ENCODE measurements at regions of chr11 and their contacts with region 1.

Region 1: DNA sequence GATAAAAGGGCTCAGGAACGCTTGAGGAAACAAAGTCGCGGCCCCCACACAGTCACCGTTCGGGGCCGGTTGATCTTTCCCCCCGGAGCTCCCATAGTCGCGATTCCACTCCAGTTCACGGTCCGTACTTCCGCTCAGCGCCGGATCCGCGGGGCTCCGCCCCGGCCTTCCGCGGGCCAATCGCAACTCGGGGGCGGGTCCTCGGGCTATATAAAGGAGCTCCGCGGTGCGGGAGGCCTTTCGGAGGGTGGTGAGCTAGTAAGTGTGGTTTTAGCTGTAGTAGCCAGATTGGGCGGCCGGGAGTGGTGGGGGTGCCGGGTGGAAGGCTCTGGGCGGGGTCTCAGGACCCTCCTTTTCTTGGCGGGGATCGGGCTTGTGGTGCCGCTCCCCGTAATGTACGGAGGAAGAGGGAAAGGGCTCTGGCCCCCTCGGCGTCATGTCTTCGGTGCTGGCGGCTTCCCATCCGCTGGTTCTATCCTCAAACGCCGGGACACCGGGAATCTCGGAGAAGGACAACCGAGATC is at the starts of genes C11orf98 and CSKMT:
- DNase-seq: peak; percentile 59
- ATAC-seq: peak; percentile 90
- H3K4me3 ChIP-seq: peak within 1 kb of the TSS; percentile 94 to 96
- H3K27ac ChIP-seq: peak within 1 kb of the TSS; percentile 99
- H3K4me1 ChIP-seq: peaks cover 22% of the 10 kb centered on the region
- H3K27me3 ChIP-seq: no peaks in the 10 kb centered on the region
- CTCF ChIP-seq: no peak
- total RNA-seq, gene C11orf98: 96.7 TPM
- total RNA-seq, gene CSKMT: 36.9 TPM

Region 2: DNA sequence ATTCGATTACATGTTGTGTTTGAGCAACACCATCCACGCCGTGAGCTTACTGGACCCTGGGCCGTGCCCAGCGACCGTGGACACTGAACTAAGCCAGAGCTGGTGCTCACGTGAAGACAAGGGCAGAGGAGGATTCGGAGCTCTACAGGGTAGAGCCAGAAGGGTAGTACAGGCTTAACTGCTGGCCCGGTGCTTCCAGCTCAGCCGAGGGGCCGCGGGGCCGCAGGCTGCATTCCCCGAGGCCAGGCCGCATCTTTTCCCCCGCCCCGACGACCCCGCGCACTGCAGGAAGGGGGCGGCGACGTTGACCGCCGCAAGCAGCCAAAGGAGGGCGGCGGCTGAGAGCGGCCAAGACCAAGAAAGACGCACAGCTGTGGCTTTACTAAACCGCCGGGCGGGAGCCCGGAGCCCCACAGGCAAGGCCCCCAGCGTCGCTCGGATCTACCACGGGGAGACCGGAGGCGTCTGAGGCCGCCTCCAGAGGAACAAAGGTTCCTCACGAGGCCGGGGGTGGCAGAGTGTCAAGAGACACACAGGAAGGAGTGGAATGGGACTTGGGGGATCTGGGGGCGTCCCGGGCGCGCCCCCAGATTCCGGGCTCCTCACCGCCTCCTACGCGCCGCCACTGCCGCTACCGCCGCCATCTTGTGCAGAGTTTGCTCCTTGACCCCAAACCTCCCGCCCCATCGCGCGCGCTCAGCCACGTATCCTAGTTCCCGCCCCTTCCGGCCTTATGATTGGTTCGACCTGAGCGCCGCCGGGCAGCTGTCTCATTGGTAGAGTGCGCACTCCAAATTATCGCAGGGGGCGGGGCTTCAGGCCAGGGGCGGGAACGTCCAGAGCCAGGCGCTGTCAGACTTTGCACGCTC is 18.9 kb before region 1 on chr11 and contains the start of gene GANAB:
- CTCF ChIA-PET with region 1: no interaction called
- POLR2A ChIA-PET with region 1: interaction called, 20 read pairs
- in situ Hi-C with region 1: no loop called
- intact Hi-C with region 1: no loop called
- DNase-seq: peak; percentile 80
- ATAC-seq: peak; percentile 98
- H3K4me3 ChIP-seq: peak within 1 kb of the TSS; percentile 69 to 92
- H3K27ac ChIP-seq: peak within 1 kb of the TSS; percentile 80
- H3K4me1 ChIP-seq: peaks cover 21% of the 10 kb centered on the region
- H3K27me3 ChIP-seq: no peaks in the 10 kb centered on the region
- CTCF ChIP-seq: no peak
- total RNA-seq, gene GANAB: 415 TPM

Region 3: GRCh38 chr11:62652161-62653006 is 12.8 kb before region 1 on chr11:
- CTCF ChIA-PET with region 1: no interaction called
- POLR2A ChIA-PET with region 1: interaction called, 20 read pairs
- in situ Hi-C with region 1: no loop called
- intact Hi-C with region 1: no loop called
- DNase-seq: no peak
- ATAC-seq: no peak
- H3K4me3 ChIP-seq: peak overlapping the region; percentile 86 to 93
- H3K27ac ChIP-seq: peak overlapping the region; percentile 97
- H3K4me1 ChIP-seq: peaks cover 8% of the 10 kb centered on the region
- H3K27me3 ChIP-seq: no peaks in the 10 kb centered on the region
- CTCF ChIP-seq: no peak

Region 4: DNA sequence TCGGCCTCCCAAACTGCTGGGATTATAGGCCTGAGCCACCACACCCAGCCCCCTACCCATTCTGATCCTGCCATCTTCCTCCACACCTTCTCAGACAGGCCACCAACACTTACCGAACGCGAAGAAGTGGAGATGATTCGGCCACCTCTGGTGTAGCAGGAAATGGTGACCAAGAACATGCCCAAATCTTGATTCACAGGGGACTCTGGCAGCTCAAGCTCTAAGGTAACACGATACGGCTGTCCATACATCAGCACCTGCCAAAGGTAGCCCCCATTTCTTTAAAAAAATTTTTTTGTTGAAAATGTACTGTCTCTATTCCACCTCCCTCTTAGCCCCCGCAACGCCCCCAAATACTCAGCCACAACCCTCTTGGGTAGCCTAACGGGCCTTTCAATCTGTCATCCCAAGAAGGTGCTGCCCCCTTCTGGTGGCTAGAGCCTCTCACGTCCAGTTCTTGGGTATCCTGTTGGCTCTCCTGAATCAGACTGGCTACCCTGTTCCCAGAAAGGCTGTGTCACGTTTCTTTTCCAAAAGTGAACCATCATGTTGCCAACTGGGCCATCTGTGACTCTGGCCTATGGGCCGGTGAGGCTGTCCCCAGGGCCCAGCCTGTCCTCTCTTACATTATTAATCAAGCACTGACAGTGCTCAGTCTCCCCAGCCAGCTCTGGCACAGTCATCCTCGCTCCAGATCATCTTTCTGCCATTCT is 29.5 kb after region 1 on chr11:
- CTCF ChIA-PET with region 1: interaction called, 13 read pairs
- POLR2A ChIA-PET with region 1: no interaction called
- in situ Hi-C with region 1: no loop called
- intact Hi-C with region 1: no loop called
- DNase-seq: peak; percentile 46
- ATAC-seq: peak; percentile 85
- H3K4me3 ChIP-seq: no peak overlapping the region
- H3K27ac ChIP-seq: no peak overlapping the region
- H3K4me1 ChIP-seq: no peaks in the 10 kb centered on the region
- H3K27me3 ChIP-seq: no peaks in the 10 kb centered on the region
- CTCF ChIP-seq: peak; percentile 90